Calu3 (cell line): ENCODE measurements at regions of chr2 and their contacts with region 1.

Region 1: GRCh38 chr2:167140767-167141166 is 252.5 kb downstream of the XIRP2 start:
- DNase-seq: peak; percentile 67
- H3K4me3 Mint-ChIP-seq: peak overlapping the region; percentile 46
- H3K27ac Mint-ChIP-seq: peak overlapping the region; percentile 77
- H3K4me1 Mint-ChIP-seq: peaks cover 30% of the 10 kb centered on the region
- H3K27me3 Mint-ChIP-seq: no peaks in the 10 kb centered on the region
- CTCF ChIP-seq: no peak

Region 2: GRCh38 chr2:166900700-166901099 is 240.1 kb before region 1 on chr2:
- CTCF ChIA-PET with region 1: no interaction called
- intact Hi-C with region 1: no loop called
- DNase-seq: peak; percentile 14
- H3K4me3 Mint-ChIP-seq: no peak overlapping the region
- H3K27ac Mint-ChIP-seq: no peak overlapping the region
- H3K4me1 Mint-ChIP-seq: no peaks in the 10 kb centered on the region
- H3K27me3 Mint-ChIP-seq: no peaks in the 10 kb centered on the region
- CTCF ChIP-seq: no peak

Region 3: DNA sequence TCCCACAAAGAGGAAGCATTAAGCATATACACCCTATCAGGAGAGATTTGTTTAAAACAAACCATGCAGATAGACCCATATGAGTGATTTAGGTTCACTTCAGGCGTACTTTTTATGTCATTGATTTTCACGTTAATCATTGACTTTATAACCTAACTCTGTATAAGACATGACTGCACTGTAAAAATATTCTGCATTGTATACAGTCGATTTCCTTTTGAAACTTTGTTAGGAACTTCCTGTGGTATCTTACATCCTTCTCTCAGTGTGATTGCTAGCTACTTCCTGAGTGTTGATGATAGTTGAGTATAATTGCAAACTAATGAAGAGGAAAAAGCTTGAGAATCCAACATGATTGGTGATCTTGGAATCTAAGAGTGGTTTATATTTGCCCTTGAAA is 183.1 kb before region 1 on chr2:
- CTCF ChIA-PET with region 1: no interaction called
- intact Hi-C with region 1: loop called (anchors 5 kb)
- DNase-seq: no peak
- H3K4me3 Mint-ChIP-seq: peak overlapping the region; percentile 24
- H3K27ac Mint-ChIP-seq: peak overlapping the region; percentile 75
- H3K4me1 Mint-ChIP-seq: peaks cover 17% of the 10 kb centered on the region
- H3K27me3 Mint-ChIP-seq: no peaks in the 10 kb centered on the region
- CTCF ChIP-seq: no peak

Region 4: GRCh38 chr2:167186465-167186864 is 45.7 kb after region 1 on chr2:
- CTCF ChIA-PET with region 1: no interaction called
- intact Hi-C with region 1: no loop called
- DNase-seq: no peak
- H3K4me3 Mint-ChIP-seq: no peak overlapping the region
- H3K27ac Mint-ChIP-seq: no peak overlapping the region
- H3K4me1 Mint-ChIP-seq: no peaks in the 10 kb centered on the region
- H3K27me3 Mint-ChIP-seq: no peaks in the 10 kb centered on the region
- CTCF ChIP-seq: no peak

Region 5: GRCh38 chr2:167196461-167197252 is 55.9 kb after region 1 on chr2:
- CTCF ChIA-PET with region 1: no interaction called
- intact Hi-C with region 1: loop called (anchors 1 kb)
- DNase-seq: peak; percentile 32
- H3K4me3 Mint-ChIP-seq: peak overlapping the region; percentile 50
- H3K27ac Mint-ChIP-seq: no peak overlapping the region
- H3K4me1 Mint-ChIP-seq: peaks cover 55% of the 10 kb centered on the region
- H3K27me3 Mint-ChIP-seq: no peaks in the 10 kb centered on the region
- CTCF ChIP-seq: no peak